ENCODE measurements at regions of chr17 and their contacts with region 1.

Region 1: GRCh38 chr17:32746698-32747097 is 130.2 kb downstream of the MYO1D start:
- DNase-seq: no peak
- ATAC-seq: no peak
- H3K4me3 ChIP-seq: no peak overlapping the region
- H3K27ac ChIP-seq: no peak overlapping the region
- H3K4me1 ChIP-seq: no peaks in the 10 kb centered on the region
- H3K27me3 ChIP-seq: peaks cover 14% of the 10 kb centered on the region; the same call in 1 of the 2 replicates
- CTCF ChIP-seq: no peak

Region 2: GRCh38 chr17:32558997-32559650 is 187.6 kb before region 1 on chr17:
- CTCF ChIA-PET with region 1: no interaction called
- POLR2A ChIA-PET with region 1: interaction called, 11 read pairs
- in situ Hi-C with region 1: no loop called
- intact Hi-C with region 1: no loop called
- DNase-seq: no peak
- ATAC-seq: no peak
- H3K4me3 ChIP-seq: no peak overlapping the region
- H3K27ac ChIP-seq: no peak overlapping the region
- H3K4me1 ChIP-seq: no peaks in the 10 kb centered on the region
- H3K27me3 ChIP-seq: no peaks in the 10 kb centered on the region
- CTCF ChIP-seq: no peak

Region 3: GRCh38 chr17:33106525-33107165 is 359.9 kb after region 1 on chr17:
- CTCF ChIA-PET with region 1: no interaction called
- POLR2A ChIA-PET with region 1: no interaction called
- in situ Hi-C with region 1: no loop called
- intact Hi-C with region 1: no loop called
- DNase-seq: no peak
- ATAC-seq: no peak
- H3K4me3 ChIP-seq: no peak overlapping the region
- H3K27ac ChIP-seq: no peak overlapping the region
- H3K4me1 ChIP-seq: no peaks in the 10 kb centered on the region
- H3K27me3 ChIP-seq: no peaks in the 10 kb centered on the region
- CTCF ChIP-seq: no peak